ENCODE measurements at regions of chr18 and their contacts with region 1.

Region 1: GRCh38 chr18:32072321-32072720 is 19.4 kb upstream of the RNF138 start:
- DNase-seq: no peak
- H3K4me3 Mint-ChIP-seq: no peak overlapping the region
- H3K27ac Mint-ChIP-seq: no peak overlapping the region
- H3K4me1 Mint-ChIP-seq: peaks cover 22% of the 10 kb centered on the region
- H3K27me3 Mint-ChIP-seq: no peaks in the 10 kb centered on the region

Region 2: DNA sequence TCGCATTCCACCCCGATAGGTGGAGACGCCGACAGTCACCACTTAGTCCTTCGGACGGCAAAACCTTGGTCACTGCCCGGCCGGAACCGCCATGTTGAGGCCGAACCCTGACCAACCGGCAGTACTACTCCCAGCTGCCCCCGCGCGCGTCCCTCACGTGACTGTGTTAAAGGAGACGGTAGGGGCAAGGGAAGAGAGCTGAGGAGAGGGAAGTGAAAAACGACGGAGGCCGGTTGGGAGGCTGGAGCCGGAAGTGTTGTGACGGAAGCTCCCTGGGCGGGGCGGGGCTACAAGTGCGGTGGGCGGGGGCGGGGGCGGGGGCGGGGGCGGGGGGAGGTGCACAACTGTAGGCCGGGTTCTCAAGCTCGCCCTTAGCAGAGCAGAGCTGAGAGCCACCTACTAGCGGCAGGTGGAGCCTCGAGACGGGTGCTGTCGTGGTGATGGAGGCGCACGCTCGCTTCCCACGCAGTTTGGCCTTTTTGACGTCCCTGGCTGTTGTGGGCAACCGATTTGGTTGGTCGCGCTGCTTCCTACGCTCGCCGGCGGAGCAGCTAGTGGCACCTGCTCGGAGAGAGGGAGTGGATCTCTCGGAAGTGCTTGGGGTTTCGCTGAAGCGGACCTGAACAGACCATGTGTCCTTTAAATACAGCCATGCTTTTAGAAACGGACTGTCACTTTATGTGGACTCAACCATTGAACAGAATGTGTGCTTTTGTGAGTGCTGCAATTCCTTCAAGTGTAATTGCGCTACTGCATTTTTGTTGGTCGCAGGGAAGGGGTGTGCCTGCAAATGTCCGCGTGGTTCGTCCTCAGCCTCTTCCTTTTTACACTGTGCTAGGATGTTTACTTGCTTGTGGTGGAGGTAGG is 129.1 kb before region 1 on chr18 and contains the start of gene TRAPPC8:
- CTCF ChIA-PET with region 1: interaction called, 20 read pairs
- POLR2A ChIA-PET with region 1: interaction called, 11 read pairs
- DNase-seq: peak; percentile 94
- H3K4me3 Mint-ChIP-seq: peak within 1 kb of the TSS; percentile 100
- H3K27ac Mint-ChIP-seq: peak within 1 kb of the TSS; percentile 98
- H3K4me1 Mint-ChIP-seq: peaks cover 51% of the 10 kb centered on the region
- H3K27me3 Mint-ChIP-seq: no peaks in the 10 kb centered on the region
- total RNA-seq, gene TRAPPC8: 40.1 to 42.7 TPM

Region 3: GRCh38 chr18:32026491-32027086 is 45.7 kb before region 1 on chr18:
- CTCF ChIA-PET with region 1: interaction called, 19 read pairs
- POLR2A ChIA-PET with region 1: interaction called, 5 read pairs
- DNase-seq: no peak
- H3K4me3 Mint-ChIP-seq: peak overlapping the region; percentile 59
- H3K27ac Mint-ChIP-seq: peak overlapping the region; percentile 78
- H3K4me1 Mint-ChIP-seq: peaks cover 78% of the 10 kb centered on the region
- H3K27me3 Mint-ChIP-seq: no peaks in the 10 kb centered on the region

Region 4: GRCh38 chr18:32048507-32049091 is 23.7 kb before region 1 on chr18:
- CTCF ChIA-PET with region 1: interaction called, 15 read pairs
- POLR2A ChIA-PET with region 1: interaction called, 7 read pairs
- DNase-seq: no peak
- H3K4me3 Mint-ChIP-seq: no peak overlapping the region
- H3K27ac Mint-ChIP-seq: peak overlapping the region; percentile 91
- H3K4me1 Mint-ChIP-seq: peaks cover 53% of the 10 kb centered on the region
- H3K27me3 Mint-ChIP-seq: no peaks in the 10 kb centered on the region

Region 5: DNA sequence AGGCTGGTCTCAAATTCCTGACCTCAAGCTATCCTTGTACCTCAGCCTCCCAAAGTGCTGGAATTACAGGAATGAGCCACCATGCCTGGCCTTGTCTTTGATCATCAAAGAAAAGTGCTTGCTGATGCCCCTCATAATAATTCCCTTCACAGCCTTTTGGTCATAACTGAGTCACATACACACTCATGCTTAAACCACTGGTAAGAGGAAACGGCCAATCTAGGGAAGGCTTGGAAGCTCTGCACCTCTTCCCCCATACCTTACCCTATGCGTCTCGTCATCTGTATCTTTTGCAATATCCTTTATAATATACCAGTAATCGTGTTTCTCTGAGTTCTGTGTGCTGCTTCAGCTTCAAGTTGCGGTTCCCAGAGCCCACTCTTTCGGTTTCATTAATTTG is 14.5 kb after region 1 on chr18:
- CTCF ChIA-PET with region 1: interaction called, 36 read pairs
- POLR2A ChIA-PET with region 1: interaction called, 17 read pairs
- DNase-seq: no peak
- H3K4me3 Mint-ChIP-seq: no peak overlapping the region
- H3K27ac Mint-ChIP-seq: peak overlapping the region; percentile 5
- H3K4me1 Mint-ChIP-seq: peaks cover 43% of the 10 kb centered on the region
- H3K27me3 Mint-ChIP-seq: peaks cover 2% of the 10 kb centered on the region